ENCODE measurements at regions of chr15 and their contacts with region 1.

Region 1: GRCh38 chr15:71800835-71801745 is 9.3 kb upstream of the NR2E3 start:
- DNase-seq: peak; percentile 54
- H3K4me3 ChIP-seq: no peak overlapping the region
- H3K27ac ChIP-seq: no peak overlapping the region
- H3K4me1 ChIP-seq: peaks cover 7% of the 10 kb centered on the region
- H3K27me3 ChIP-seq: no peaks in the 10 kb centered on the region
- CTCF ChIP-seq: peak; percentile 84 to 86

Region 2: DNA sequence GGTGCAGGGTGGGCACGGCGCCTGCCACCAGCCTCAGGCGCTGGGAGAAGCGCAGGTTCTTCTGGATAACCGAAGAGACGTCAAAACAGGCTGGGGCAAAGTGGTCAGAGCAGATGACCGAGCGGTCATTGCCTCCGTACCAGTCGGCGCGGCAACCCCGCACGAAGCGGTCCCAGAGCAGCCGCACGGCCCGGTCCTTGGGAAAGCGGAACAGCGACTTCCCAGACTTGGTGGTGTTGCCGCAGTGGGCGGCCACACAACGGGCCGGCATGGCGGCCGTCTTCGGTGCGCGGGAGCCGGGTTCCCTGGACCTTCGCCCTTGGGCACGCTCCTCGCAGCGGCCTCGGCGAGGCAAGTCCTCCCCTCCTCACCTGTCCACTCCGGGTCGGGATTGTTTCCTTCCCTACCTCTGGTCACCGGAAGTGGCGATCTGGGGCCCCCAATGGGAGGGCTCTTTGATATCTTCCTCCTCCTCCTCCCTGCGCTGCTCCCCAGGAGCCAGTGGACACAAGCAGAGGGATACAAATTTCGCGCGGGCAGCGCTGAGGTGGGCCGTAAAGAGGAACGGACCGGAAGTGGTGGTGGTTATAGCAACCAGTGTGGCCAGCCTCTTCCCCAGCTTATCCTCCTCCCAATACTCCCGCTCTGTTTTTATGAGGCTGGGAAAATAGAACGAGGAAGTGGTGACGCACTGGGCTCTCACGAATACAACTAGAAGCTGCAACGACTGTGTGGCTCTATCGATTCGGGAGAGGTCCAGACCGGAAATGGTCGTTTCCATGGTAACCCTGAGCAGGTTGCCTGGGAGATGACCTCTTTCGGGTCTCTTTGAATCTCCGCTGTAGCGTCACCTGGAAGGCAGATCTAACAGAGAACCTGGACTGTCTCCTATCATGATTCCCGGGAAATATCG is 908.8 kb before region 1 on chr15 and contains the starts of genes LRRC49 and THAP10:
- CTCF ChIA-PET with region 1: no interaction called
- dilution Hi-C with region 1: no loop called
- in situ Hi-C with region 1: no loop called
- intact Hi-C with region 1: loop called (anchors 2 kb)
- DNase-seq: peak; percentile 97
- H3K4me3 ChIP-seq: peak within 1 kb of the TSS; percentile 80 to 88 (median 85)
- H3K27ac ChIP-seq: peak within 1 kb of the TSS; percentile 79
- H3K4me1 ChIP-seq: peaks cover 13% of the 10 kb centered on the region
- H3K27me3 ChIP-seq: no peaks in the 10 kb centered on the region
- CTCF ChIP-seq: peak in 1 of 2 donors; percentile 0
- total RNA-seq, gene LRRC49: 9.0 to 21.2 TPM
- total RNA-seq, gene THAP10: 3.0 to 4.9 TPM

Region 3: DNA sequence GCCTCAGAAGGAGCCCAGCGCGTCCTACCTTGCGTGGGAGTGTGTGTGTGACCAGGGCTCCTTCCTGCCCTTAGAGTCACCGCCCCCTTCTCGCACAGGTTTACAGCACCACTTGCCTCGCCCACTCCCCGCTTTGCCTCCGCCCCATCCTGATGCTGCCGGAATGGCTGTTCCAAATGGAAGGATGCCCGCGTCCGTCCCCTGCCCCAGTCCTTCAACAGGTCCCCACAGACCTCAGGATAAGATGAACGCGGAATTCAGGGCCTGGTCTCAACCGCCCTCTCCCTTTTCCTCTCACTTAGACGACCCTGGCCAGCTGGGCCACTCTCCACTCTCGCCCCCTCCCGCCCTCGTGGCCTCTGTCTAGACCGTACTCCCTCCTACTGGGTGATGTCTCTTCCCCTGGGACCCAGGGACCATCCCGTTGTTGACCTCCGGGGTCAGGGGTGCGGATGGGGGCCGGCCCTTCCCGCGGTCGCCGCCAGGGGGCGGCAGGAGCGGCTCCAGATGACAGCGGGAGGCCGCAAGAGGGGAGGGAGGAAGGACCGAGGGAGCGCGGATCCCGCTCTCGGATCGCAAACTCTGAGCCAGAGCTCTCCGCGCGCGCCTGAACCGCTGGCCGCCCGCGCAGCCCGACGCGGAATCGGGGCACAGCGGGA is 686.1 kb before region 1 on chr15 and contains the start of gene THSD4:
- CTCF ChIA-PET with region 1: no interaction called
- dilution Hi-C with region 1: no loop called
- in situ Hi-C with region 1: no loop called
- intact Hi-C with region 1: loop called (anchors 5 kb)
- DNase-seq: peak; percentile 66
- H3K4me3 ChIP-seq: peak within 1 kb of the TSS; percentile 71 to 75 (median 75)
- H3K27ac ChIP-seq: peak within 1 kb of the TSS; percentile 90
- H3K4me1 ChIP-seq: peaks cover 31% of the 10 kb centered on the region
- H3K27me3 ChIP-seq: no peaks in the 10 kb centered on the region
- CTCF ChIP-seq: peak; percentile 87 to 99
- total RNA-seq, gene THSD4: 87.7 to 111 TPM

Region 4: DNA sequence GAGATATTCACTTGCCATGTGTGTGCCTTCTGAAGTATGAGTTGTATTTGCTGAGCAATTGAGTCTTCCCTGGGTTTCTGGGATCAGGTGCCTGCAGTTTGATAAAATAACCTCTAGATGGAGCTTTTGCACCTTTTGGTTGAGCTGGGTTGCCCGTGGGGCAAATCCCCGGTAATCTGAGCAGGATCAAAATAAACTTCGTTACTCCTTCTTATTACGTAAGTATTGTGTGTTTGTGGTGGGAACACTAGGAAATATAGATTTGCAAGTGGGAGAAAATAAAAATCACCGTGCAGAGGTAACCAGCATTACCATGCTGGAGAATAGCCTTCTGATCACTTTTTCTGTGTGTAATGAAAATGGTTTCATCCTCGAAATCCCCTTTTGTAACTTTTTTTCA is 268.1 kb before region 1 on chr15:
- CTCF ChIA-PET with region 1: no interaction called
- dilution Hi-C with region 1: no loop called
- in situ Hi-C with region 1: loop called in 1 of 2 experiments (anchors 10 kb)
- intact Hi-C with region 1: loop called (anchors 1 kb)
- DNase-seq: peak; percentile 63
- H3K4me3 ChIP-seq: no peak overlapping the region
- H3K27ac ChIP-seq: no peak overlapping the region
- H3K4me1 ChIP-seq: peaks cover 8% of the 10 kb centered on the region
- H3K27me3 ChIP-seq: no peaks in the 10 kb centered on the region
- CTCF ChIP-seq: peak; percentile 74 to 81

Region 5: GRCh38 chr15:71743861-71744382 is 57.2 kb before region 1 on chr15:
- CTCF ChIA-PET with region 1: no interaction called
- dilution Hi-C with region 1: no loop called
- in situ Hi-C with region 1: no loop called
- intact Hi-C with region 1: loop called (anchors 1 kb)
- DNase-seq: peak; percentile 21
- H3K4me3 ChIP-seq: no peak overlapping the region
- H3K27ac ChIP-seq: no peak overlapping the region
- H3K4me1 ChIP-seq: peaks cover 27% of the 10 kb centered on the region
- H3K27me3 ChIP-seq: no peaks in the 10 kb centered on the region
- CTCF ChIP-seq: peak; percentile 57 to 71

Region 6: GRCh38 chr15:71780115-71780976 is 20.7 kb before region 1 on chr15:
- CTCF ChIA-PET with region 1: no interaction called
- dilution Hi-C with region 1: no loop called
- in situ Hi-C with region 1: no loop called
- intact Hi-C with region 1: loop called (anchors 1 kb)
- DNase-seq: peak; percentile 23
- H3K4me3 ChIP-seq: no peak overlapping the region
- H3K27ac ChIP-seq: no peak overlapping the region
- H3K4me1 ChIP-seq: no peaks in the 10 kb centered on the region
- H3K27me3 ChIP-seq: no peaks in the 10 kb centered on the region
- CTCF ChIP-seq: peak; percentile 73 to 77